ENCODE measurements at regions of chr19 and their contacts with region 1.

Region 1: DNA sequence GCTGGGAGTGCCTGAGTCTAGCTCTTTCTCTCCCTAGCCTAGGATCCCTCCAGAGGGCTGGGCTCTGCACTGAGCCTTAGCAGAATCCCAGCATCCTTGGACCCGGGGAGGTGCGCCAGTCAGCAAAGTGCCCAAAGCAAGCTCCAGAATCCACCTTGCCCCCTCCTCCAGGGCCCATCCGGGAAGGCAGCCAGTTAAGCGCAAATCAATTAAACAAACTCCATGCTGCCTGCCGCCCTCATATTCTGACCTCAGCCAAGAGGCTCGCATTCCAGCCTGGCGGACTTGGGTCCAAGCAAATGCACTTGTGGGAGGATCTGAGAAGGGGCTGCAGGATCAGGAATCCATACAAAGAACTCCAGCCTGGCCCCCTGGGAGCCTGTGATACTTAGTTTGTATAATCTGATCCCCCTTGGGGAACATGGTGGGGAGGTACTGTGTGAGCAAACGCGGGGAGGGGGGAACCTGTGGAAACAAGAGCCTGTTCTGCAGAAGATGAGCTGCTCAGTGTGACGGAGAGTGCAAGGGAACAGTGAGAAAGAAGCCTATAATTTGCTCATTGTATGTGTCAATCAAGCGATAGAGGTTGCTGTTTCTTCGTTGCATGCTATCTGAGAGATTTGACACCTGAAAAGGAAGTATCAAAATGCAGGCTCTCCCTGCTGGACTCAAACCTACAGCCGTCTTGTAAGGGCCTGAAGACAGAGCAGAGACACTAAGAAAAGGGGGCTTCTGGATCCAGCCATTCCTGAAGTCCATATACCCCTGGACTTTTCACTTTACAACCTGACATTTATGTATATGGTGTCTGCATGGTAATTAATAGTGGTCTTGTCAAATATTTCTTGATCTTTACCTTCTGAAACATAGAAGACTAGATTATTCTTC is 29.4 kb downstream of the ZNRF4 start:
- DNase-seq: peak; percentile 42
- H3K4me3 ChIP-seq: no peak overlapping the region
- H3K27ac ChIP-seq: no peak overlapping the region
- H3K4me1 ChIP-seq: peaks cover 9% of the 10 kb centered on the region
- H3K27me3 ChIP-seq: no peaks in the 10 kb centered on the region
- CTCF ChIP-seq: no peak

Region 2: DNA sequence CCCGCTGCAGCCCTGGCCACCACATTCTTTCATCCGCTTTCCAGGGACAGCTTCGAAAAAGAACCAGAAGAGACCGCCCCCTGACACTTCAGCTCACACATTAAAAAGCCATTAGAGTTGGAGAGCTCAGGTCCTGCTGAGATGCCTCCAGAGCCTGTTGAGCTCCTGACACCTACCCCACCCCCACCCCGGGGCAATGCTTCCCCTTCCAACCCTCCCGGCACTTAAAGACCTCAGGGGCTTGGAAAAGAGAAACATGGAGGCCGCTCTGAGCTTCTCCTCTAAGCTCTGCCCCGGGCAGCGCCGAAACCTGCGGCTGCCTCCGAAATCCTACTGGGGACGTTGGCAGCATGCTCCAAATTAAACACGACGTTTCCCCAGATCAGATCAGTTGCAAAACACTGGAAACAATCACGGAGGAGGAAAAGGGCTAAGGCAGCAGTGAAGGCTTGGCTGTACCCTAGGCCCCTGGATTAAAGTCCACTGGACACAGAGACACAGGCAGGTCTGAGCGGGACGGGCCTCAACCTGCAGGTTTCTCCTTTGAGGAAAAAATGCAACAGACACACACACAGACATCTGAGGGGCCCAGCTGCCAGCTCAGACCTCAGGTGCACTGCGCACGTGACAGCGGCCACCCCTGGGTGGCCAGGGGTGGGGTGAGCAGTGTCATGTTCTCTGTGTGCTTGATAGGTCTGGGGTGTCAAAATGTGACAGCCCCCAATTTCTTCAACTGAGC is 1093.9 kb before region 1 on chr19:
- CTCF ChIA-PET with region 1: no interaction called
- POLR2A ChIA-PET with region 1: no interaction called
- intact Hi-C with region 1: no loop called
- DNase-seq: peak; percentile 67
- H3K4me3 ChIP-seq: no peak overlapping the region
- H3K27ac ChIP-seq: peak overlapping the region; percentile 76
- H3K4me1 ChIP-seq: peaks cover 28% of the 10 kb centered on the region
- H3K27me3 ChIP-seq: no peaks in the 10 kb centered on the region
- CTCF ChIP-seq: no peak

Region 3: GRCh38 chr19:4889034-4889815 is 595.4 kb before region 1 on chr19:
- CTCF ChIA-PET with region 1: no interaction called
- POLR2A ChIA-PET with region 1: interaction called, 15 read pairs
- intact Hi-C with region 1: no loop called
- DNase-seq: no peak
- H3K4me3 ChIP-seq: no peak overlapping the region
- H3K27ac ChIP-seq: no peak overlapping the region
- H3K4me1 ChIP-seq: no peaks in the 10 kb centered on the region
- H3K27me3 ChIP-seq: no peaks in the 10 kb centered on the region
- CTCF ChIP-seq: no peak

Region 4: GRCh38 chr19:5073153-5073844 is 411.3 kb before region 1 on chr19:
- CTCF ChIA-PET with region 1: interaction called, 10 read pairs
- POLR2A ChIA-PET with region 1: no interaction called
- intact Hi-C with region 1: no loop called
- DNase-seq: no peak
- H3K4me3 ChIP-seq: no peak overlapping the region
- H3K27ac ChIP-seq: no peak overlapping the region
- H3K4me1 ChIP-seq: peaks cover 28% of the 10 kb centered on the region
- H3K27me3 ChIP-seq: no peaks in the 10 kb centered on the region
- CTCF ChIP-seq: no peak

Region 5: DNA sequence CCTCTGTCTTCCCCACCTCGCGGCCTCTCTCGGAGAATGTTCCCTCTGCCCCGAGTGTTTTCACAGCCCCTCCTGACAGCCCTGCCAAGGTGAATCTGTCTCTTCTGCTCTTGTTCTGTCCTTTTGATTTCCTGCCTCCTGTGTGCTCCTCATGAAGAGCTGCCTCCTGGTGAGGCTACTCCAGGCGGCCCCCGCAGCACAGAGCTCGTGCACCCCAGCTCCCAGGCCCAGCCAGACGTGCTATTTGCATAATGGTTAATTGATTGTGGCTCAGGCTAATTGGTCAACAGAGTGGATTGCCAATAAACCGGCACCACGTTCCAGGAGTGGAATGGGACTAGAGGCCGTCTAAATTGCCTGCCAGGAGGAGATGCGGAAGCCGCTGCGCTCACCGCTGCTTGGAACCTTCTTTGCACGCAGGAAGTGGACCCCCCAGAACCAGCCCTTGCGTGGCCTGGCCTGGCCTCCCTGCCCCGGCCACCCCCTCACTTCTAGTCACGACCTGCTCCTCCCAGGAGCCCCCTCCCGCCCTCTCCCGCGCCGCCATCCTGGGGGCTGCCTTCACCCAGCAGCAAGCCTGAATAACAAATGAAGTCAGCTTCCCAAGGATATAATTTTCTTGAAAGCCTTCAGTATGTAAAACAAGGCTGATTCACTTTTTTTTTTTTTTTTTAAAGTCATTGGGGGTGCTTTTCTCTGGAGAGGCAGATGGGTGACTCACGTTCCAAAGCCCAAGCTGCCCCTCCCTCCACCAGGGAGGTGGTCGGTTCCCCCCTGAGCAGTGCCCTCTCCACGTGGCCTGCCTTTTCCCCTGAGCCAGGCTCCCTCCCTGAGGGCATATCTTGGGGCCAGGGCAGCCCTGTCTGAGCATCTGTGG is 371.7 kb before region 1 on chr19:
- CTCF ChIA-PET with region 1: interaction called, 10 read pairs
- POLR2A ChIA-PET with region 1: no interaction called
- intact Hi-C with region 1: no loop called
- DNase-seq: peak; percentile 77
- H3K4me3 ChIP-seq: no peak overlapping the region
- H3K27ac ChIP-seq: peak overlapping the region; percentile 65
- H3K4me1 ChIP-seq: peaks cover 27% of the 10 kb centered on the region
- H3K27me3 ChIP-seq: no peaks in the 10 kb centered on the region
- CTCF ChIP-seq: no peak

Region 6: DNA sequence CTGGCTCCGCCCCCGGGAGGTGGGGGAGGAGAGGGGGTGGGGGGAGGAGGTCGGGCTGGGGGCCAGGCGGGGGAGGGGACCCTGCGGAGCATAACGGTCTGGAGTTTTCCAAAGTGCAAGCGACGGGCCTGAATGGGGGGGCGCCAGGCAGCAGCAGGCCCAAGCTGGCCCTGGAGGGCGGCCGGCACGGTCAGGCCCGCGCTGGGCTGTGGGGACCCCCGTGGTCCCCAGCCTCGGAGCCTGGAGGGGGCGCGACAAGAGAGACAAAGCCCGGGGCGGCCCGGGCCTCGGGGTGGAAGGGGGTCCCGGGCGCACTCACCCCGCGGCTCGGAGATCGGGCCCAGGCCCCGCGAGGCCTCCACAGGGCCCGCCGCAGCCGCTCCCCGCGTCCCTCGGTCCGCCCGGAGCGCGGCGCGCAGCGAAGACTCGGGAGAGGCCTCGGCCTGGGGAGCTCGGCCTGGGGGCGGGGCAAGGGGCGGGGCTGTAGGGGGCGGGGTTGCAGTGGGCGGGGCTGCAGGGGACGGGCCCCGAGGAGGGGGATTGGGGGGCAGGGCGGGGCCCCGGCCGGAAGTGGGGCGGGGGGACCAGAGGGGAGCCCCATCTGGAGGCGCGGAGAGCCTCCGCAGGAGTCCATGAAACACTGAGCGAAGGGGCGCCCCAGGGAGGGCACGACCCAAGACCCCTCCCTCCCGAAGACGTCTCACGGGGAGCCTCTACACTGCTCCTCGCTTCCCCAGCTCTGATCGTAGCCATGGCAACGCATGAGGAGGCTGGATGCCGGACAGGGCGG is 191.6 kb before region 1 on chr19:
- CTCF ChIA-PET with region 1: no interaction called
- POLR2A ChIA-PET with region 1: interaction called, 12 read pairs
- intact Hi-C with region 1: no loop called
- DNase-seq: peak; percentile 86
- H3K4me3 ChIP-seq: peak overlapping the region; percentile 69
- H3K27ac ChIP-seq: peak overlapping the region; percentile 93
- H3K4me1 ChIP-seq: peaks cover 9% of the 10 kb centered on the region
- H3K27me3 ChIP-seq: no peaks in the 10 kb centered on the region
- CTCF ChIP-seq: no peak

Measured in A673 (cell line).